Activated T-helper 1 cell treated with anti-CD3 and anti-CD28 coated beads, Interleukin-12 subunit alpha, Interleukin-12 subunit beta, Interleukin-2, Interleukin-4 antibody, amounts not matched to agents 30 ng/mL and 10 ng/mL and 1 ng/mL, durations not matched to agents 14 hours and 24 hours and 36 hours (primary cell): ENCODE measurements at regions of chr6 and their contacts with region 1.

Region 1: GRCh38 chr6:159789377-159790148 is at the start of gene TCP1:
- DNase-seq: peak; percentile 99
- H3K4me3 Mint-ChIP-seq: peak within 1 kb of the TSS; percentile 96
- H3K27ac Mint-ChIP-seq: peak within 1 kb of the TSS; percentile 98
- H3K4me1 Mint-ChIP-seq: peaks cover 67% of the 10 kb centered on the region
- H3K27me3 Mint-ChIP-seq: no peaks in the 10 kb centered on the region
- total RNA-seq, gene TCP1: 454 and 457 TPM in 2 replicates

Region 2: GRCh38 chr6:158819213-158819909 is 970.2 kb before region 1 on chr6 and contains the start of gene EZR:
- intact Hi-C with region 1: loop called (anchors 5 kb)
- DNase-seq: peak; percentile 71
- H3K4me3 Mint-ChIP-seq: peak within 1 kb of the TSS; percentile 79
- H3K27ac Mint-ChIP-seq: peak within 1 kb of the TSS; percentile 86
- H3K4me1 Mint-ChIP-seq: peaks cover 55% of the 10 kb centered on the region
- H3K27me3 Mint-ChIP-seq: no peaks in the 10 kb centered on the region
- total RNA-seq, gene EZR: 205 and 206 TPM in 2 replicates

Region 3: DNA sequence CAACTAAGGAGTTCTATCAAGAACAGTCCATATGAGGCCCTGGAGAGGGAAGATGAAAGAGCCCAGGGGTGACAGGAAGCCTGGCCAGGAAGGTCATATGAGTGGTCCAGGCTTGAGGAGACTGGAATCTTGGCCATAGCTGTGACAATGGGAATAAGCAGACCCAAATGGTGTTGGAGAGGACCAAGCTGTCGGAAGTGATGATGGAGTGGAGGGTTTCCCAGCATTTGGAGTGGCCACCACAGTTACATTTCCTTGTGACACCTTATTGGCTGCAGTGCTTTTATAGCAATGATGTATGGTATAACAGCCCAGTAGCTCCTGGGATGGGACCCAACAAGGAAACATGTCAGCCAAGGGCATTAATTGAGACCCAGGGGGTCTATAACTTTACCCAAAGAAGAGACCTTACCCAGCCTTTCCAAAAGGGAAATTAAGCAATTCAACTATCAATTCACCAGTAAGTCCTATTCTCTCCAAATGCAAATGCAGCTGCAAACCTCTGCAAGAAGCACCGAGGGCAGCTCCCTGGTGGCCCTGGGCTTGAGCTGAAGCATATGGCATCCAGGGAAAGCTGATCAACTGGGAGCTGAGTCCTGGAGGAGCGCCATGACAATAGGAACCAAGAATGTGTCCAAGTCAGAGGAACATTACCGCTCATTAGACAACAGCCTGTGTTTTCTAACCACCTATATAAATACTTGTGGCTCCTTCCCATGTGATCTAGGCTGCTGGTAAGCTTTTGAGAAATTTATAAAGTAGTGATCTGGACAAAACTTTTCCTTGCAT is 315.9 kb before region 1 on chr6:
- intact Hi-C with region 1: no loop called
- DNase-seq: no peak
- H3K4me3 Mint-ChIP-seq: no peak overlapping the region
- H3K27ac Mint-ChIP-seq: no peak overlapping the region
- H3K4me1 Mint-ChIP-seq: no peaks in the 10 kb centered on the region
- H3K27me3 Mint-ChIP-seq: peaks cover 1% of the 10 kb centered on the region

Region 4: DNA sequence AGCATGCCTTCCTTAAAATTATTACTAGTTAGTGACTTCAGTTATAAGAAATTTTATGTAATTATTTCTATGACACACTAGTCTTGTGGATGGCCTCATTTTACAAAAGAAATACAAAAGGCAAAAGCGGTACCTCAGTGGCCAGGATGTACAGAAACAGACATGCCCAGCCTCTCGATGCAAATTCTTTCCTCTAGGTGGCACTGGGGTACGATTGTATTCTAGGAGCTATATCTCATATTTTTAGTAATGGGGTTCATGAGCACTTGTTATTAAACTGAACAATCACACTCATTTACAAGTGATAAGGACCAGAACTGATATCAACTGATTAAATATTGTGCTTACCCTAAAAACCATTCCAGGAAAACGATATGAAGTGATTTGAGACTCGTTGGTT is 156.4 kb before region 1 on chr6:
- intact Hi-C with region 1: no loop called
- DNase-seq: no peak
- H3K4me3 Mint-ChIP-seq: no peak overlapping the region
- H3K27ac Mint-ChIP-seq: no peak overlapping the region
- H3K4me1 Mint-ChIP-seq: no peaks in the 10 kb centered on the region
- H3K27me3 Mint-ChIP-seq: peaks cover 7% of the 10 kb centered on the region

Region 5: GRCh38 chr6:159726918-159727716 is 62.4 kb before region 1 on chr6 and contains the start of gene WTAP:
- intact Hi-C with region 1: loop called (anchors 1 kb)
- DNase-seq: peak; percentile 95
- H3K4me3 Mint-ChIP-seq: peak within 1 kb of the TSS; percentile 93
- H3K27ac Mint-ChIP-seq: peak within 1 kb of the TSS; percentile 96
- H3K4me1 Mint-ChIP-seq: peaks cover 41% of the 10 kb centered on the region
- H3K27me3 Mint-ChIP-seq: no peaks in the 10 kb centered on the region
- total RNA-seq, gene WTAP: 125 and 136 TPM in 2 replicates

Region 6: GRCh38 chr6:159880412-159880975 is 90.9 kb after region 1 on chr6:
- intact Hi-C with region 1: no loop called
- DNase-seq: no peak
- H3K4me3 Mint-ChIP-seq: no peak overlapping the region
- H3K27ac Mint-ChIP-seq: no peak overlapping the region
- H3K4me1 Mint-ChIP-seq: no peaks in the 10 kb centered on the region
- H3K27me3 Mint-ChIP-seq: peaks cover 9% of the 10 kb centered on the region

Region 7: DNA sequence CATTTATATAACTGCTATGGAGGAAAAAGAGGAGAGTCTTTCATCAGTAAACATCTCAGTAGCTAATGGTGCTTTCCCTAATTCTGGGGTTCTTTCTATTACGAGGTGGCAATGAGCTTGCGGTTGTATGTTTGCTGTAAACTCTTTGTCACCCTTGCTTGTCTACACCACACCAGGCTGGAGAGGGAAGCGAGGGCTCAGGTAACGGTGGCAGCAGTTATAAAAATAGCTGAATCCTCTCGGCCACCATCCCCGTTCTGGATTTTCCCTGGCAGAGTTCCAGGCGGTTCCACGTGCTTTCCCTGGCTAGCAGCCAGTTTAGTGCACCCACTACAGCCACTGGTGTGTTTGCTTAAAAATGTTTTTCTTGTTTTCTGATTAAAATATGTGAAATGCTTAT is 140.3 kb after region 1 on chr6:
- intact Hi-C with region 1: loop called (anchors 1 kb)
- DNase-seq: no peak
- H3K4me3 Mint-ChIP-seq: no peak overlapping the region
- H3K27ac Mint-ChIP-seq: peak overlapping the region; percentile 63
- H3K4me1 Mint-ChIP-seq: peaks cover 28% of the 10 kb centered on the region
- H3K27me3 Mint-ChIP-seq: peaks cover 7% of the 10 kb centered on the region

Region 8: DNA sequence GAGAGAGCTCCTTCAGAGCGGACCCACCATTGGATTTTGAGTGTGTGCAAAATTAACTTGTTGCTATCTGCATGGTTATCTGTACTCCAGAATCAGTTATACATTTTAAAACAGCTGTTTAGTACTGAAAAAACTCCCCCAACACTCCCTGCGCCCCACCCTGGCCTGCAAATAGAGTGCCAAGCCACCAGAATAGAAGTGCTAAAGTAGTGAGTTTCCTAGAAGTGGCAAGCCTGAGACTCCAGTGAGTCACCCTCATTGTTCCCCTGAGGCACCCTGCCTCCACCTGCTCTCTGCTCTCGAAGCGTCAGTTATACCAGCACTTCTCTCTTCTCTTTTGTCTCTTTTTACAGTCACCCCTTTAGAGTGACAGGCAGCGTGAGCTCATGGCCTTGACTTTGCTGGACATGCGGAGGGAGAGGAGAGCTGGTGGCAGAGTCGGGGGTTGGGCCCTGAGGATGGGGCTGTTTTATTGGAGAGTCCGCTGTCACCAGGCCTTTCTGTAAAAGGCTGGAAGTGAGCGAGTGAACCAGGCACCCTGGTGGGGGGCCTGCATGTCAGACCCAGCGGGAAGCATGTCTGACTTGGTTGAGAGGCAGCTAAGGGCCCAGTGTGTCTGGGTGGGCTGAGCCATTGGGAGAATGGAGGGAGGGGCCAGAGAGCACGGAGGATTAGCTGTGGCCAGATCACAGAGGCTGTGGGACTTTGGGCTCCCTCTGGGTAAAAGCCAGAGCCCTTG is 189.7 kb after region 1 on chr6:
- intact Hi-C with region 1: loop called (anchors 2 kb)
- DNase-seq: peak; percentile 58
- H3K4me3 Mint-ChIP-seq: peak overlapping the region; percentile 86
- H3K27ac Mint-ChIP-seq: peak overlapping the region; percentile 97
- H3K4me1 Mint-ChIP-seq: peaks cover 89% of the 10 kb centered on the region
- H3K27me3 Mint-ChIP-seq: no peaks in the 10 kb centered on the region

Region 9: GRCh38 chr6:160462551-160463109 is 673.1 kb after region 1 on chr6:
- intact Hi-C with region 1: loop called (anchors 2 kb)
- DNase-seq: peak; percentile 76
- H3K4me3 Mint-ChIP-seq: peak overlapping the region; percentile 34
- H3K27ac Mint-ChIP-seq: peak overlapping the region; percentile 71
- H3K4me1 Mint-ChIP-seq: peaks cover 79% of the 10 kb centered on the region
- H3K27me3 Mint-ChIP-seq: peaks cover 14% of the 10 kb centered on the region